Stomach (tissue), 19 donors: ENCODE measurements at regions of chr12 and their contacts with region 1.

Region 1: DNA sequence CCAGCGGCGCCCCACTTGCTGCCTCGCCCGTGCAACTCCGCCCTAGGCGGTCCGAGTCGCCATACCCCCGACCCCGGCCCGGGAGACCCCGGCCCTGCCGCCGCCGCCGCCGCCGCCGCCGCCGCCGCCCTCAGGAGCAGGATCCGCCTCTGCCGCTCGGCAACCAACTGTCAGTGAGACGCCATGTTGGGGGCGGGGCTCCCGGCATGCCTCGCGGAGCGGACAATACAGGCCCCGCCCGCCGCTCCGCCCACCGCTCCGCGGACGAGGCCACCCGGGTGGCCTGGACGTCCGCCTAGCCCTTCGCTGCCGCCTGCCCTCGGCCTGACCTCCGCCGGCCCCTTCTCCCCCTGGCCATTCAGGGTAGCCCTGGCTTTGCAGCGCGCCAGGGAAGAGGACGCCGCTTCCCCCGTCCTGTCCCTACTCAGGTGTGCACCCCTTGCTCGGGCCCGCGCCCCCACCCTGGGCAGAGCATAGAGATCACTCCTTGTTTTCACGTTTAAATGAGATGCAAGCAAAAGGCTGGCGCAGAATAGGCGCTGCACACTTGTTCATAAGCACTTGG is at the start of gene HECTD4:
- DNase-seq: peak; percentile 97 to 98
- H3K4me3 ChIP-seq: peak within 1 kb of the TSS; percentile 91 to 99 (median 96)
- H3K27ac ChIP-seq: peak within 1 kb of the TSS; percentile 83 to 93 (median 87)
- H3K4me1 ChIP-seq: peaks cover 8 to 37% (median 28%) of the 10 kb centered on the region in 4 donors
- H3K27me3 ChIP-seq: no peaks in the 10 kb centered on the region
- CTCF ChIP-seq: no peak
- EP300 ChIP-seq: no peak
- POLR2A ChIP-seq: no peak
- total RNA-seq, gene HECTD4: 56.7 to 375 (median 89.5) TPM

Region 2: DNA sequence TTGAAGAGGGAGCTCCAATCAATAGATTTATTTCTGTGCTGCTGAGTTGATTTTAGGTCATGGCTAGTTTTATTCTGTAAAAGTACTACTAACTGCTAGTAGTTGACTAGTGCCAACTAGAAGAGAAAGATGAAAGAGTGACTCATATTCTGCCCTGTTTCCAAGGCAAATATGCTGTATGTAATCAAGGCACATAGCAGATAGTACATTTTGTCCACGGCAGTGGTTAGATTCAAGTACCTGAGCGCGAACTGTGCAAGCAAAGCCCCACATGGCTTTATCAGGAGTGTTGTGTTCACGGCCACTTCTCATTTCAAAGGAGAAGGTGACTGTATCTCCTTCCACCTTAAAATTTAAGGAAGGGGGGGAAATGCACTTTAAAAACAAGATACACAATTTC is 130.1 kb before region 1 on chr12:
- intact Hi-C with region 1: loop called (anchors 10 kb)
- DNase-seq: peak; percentile 48 to 61
- H3K4me3 ChIP-seq: no peak overlapping the region
- H3K27ac ChIP-seq: peak overlapping the region; percentile 44 to 61 (median 56)
- H3K4me1 ChIP-seq: peaks cover 0 to 37% (median 22%) of the 10 kb centered on the region in 4 donors
- H3K27me3 ChIP-seq: no peaks in the 10 kb centered on the region
- CTCF ChIP-seq: no peak
- EP300 ChIP-seq: no peak
- POLR2A ChIP-seq: no peak